ENCODE measurements at regions of chr6 and their contacts with region 1.

Region 1: DNA sequence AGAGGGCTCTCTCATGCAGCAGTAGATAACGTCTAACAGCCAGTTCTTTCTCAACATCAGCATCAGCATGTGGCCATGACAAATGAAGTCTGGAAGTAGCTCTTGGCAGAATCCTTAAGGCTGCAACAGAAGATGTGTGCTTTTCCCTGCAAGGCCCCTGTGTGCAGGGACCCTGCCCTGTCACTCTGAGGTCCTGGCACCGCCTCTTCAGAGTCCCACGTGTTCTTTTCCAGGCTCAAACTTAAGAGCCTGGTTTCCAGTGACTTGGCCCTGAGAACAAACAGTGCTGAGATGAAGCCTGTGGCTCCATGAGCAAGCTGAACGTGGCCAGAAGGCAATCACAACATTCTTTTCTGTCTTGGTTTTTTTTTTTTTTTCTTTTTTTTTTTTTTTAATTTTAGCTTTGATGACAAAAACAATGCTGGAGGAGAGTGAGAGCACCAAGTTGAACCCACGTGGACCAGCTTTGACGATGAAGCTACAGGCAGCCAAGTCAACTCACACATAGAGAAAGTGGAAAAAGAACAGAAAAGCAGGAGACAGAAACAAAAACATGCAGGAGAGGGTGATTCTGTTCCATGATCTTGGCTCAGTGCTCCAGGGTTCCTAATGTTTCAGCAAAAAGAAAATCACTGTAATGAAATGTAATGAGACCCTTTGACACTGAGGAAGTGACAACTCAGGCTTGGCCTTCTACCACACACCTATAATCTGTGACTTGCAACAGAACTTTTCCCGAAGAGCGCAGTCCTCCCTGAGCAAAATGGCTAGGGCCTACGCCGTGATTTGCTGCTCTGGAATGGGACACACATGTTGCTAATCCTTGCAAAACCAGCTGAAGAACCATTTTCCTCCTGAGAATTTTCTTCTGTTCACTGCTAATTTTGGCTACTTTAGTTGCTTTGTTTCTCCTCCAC is 86.1 kb downstream of the FOXC1 start:
- DNase-seq: no peak
- ATAC-seq: peak in 3 of 4 donors; percentile 42 to 54 (median 46)
- H3K4me3 ChIP-seq: no peak overlapping the region
- H3K27ac ChIP-seq: peak overlapping the region in 1 of 12 donors; percentile 48
- H3K4me1 ChIP-seq: peaks cover 0 to 8% (median 0%) of the 10 kb centered on the region in 12 donors
- H3K27me3 ChIP-seq: no peaks in the 10 kb centered on the region
- CTCF ChIP-seq: no peak
- POLR2A ChIP-seq: no peak

Region 2: DNA sequence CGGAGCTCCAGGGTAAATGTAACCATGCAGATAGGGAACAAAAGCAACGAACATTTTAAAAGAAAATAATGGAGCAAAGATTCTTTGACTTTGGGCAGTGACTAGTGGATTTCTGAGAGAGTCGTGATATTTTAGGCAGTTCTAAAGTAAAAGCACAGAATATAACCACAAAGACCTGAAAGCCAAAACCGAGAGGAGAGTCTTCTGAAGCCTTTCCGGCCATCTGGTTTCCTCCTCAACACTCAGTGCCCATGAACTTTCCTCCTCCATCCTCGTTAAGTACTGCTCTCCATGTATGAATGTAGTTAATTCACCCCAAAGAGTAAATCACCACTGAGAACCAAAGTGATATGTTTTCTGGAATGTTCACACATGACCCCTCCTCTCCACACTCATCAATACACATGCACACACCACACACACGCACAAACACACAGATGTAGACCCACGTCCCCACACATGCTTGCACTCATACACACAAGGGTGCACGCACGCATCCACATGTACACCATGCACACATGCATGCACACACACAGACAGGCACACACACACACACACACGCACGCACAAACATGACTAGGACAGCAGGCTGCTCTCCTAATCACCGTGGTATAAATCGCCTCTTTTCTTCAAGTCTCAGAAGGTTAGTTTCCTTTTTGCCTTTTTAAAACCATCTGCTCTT is 945.4 kb after region 1 on chr6:
- intact Hi-C with region 1: loop called in 1 of 10 experiments (anchors 10 kb)
- DNase-seq: no peak
- ATAC-seq: no peak
- H3K4me3 ChIP-seq: no peak overlapping the region
- H3K27ac ChIP-seq: no peak overlapping the region
- H3K4me1 ChIP-seq: no peaks in the 10 kb centered on the region
- H3K27me3 ChIP-seq: peaks cover 0 to 19% (median 0%) of the 10 kb centered on the region in 9 donors
- CTCF ChIP-seq: no peak
- POLR2A ChIP-seq: no peak